ENCODE measurements at regions of chr9 and their contacts with region 1.

Region 1: DNA sequence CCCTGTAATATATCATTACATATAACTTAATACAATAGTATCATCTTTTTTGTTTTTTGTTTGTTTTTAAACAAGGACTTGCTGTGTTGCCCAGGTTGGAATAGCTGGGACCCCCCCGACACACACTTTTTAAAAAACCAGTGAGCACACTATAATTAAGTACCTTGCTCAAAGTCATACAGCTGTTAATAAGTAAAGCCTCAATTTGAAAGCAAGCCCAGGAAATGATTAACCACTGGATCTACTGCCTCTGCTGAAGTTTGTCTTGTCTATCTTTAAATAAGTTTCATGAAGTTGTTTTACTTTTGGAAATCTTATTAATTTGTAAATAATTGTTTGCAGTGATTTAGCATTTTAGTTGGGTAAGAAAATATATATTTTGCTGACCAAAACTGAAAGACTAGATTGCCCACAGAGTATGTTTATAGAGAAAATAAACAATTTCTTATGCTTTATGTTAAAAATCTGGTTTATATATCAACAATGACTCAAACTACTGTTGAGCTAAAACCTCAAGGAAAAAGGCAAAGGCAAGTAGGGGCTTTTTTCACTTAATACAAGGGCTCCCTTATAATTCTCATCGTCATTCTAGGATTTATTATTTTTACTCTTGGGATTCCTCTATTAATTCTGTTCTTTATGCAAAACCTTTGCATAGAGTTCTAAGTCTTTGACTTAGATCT is 5.8 kb upstream of the CARNMT1 start:
- DNase-seq: no peak
- ATAC-seq: no peak
- H3K4me3 ChIP-seq: no peak overlapping the region
- H3K4me3 Mint-ChIP-seq: no peak overlapping the region
- H3K27ac ChIP-seq: no peak overlapping the region
- H3K27ac Mint-ChIP-seq: no peak overlapping the region
- H3K4me1 ChIP-seq: peaks cover 2% of the 10 kb centered on the region
- H3K4me1 Mint-ChIP-seq: no peaks in the 10 kb centered on the region
- H3K27me3 ChIP-seq: no peaks in the 10 kb centered on the region
- H3K27me3 Mint-ChIP-seq: no peaks in the 10 kb centered on the region
- CTCF ChIP-seq: no peak

Region 2: DNA sequence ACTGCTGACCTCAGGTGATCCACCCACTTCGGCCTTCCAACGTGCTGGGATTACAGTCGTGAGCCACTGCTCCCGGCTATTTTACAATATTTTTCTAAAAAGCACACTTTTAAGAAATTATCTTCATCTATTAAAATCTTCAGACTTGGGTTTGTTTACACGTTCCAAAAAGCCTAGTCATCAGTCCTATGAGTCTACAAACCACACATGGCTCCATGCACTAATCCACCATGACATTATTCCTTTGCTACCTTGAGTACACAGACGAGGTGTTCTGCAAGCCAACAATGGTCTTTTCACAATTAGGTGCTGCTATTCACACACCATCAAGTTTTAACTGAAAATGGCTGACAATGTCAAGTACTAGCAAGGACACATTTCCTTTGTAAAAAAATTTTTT is 187.2 kb before region 1 on chr9:
- CTCF ChIA-PET with region 1: no interaction called
- POLR2A ChIA-PET with region 1: no interaction called
- intact Hi-C with region 1: no loop called
- DNase-seq: no peak
- ATAC-seq: no peak
- H3K4me3 ChIP-seq: no peak overlapping the region
- H3K4me3 Mint-ChIP-seq: no peak overlapping the region
- H3K27ac ChIP-seq: no peak overlapping the region
- H3K27ac Mint-ChIP-seq: no peak overlapping the region
- H3K4me1 ChIP-seq: no peaks in the 10 kb centered on the region
- H3K4me1 Mint-ChIP-seq: no peaks in the 10 kb centered on the region
- H3K27me3 ChIP-seq: no peaks in the 10 kb centered on the region
- H3K27me3 Mint-ChIP-seq: peaks cover 4% of the 10 kb centered on the region
- CTCF ChIP-seq: no peak

Region 3: GRCh38 chr9:75064307-75065025 is 30.5 kb after region 1 on chr9:
- CTCF ChIA-PET with region 1: no interaction called
- POLR2A ChIA-PET with region 1: interaction called, 4 read pairs
- intact Hi-C with region 1: loop called in 1 of 2 experiments (anchors 5 kb)
- DNase-seq: no peak
- ATAC-seq: no peak
- H3K4me3 ChIP-seq: no peak overlapping the region
- H3K4me3 Mint-ChIP-seq: no peak overlapping the region
- H3K27ac ChIP-seq: no peak overlapping the region
- H3K27ac Mint-ChIP-seq: peak overlapping the region; percentile 56
- H3K4me1 ChIP-seq: no peaks in the 10 kb centered on the region
- H3K4me1 Mint-ChIP-seq: peaks cover 8% of the 10 kb centered on the region
- H3K27me3 ChIP-seq: no peaks in the 10 kb centered on the region
- H3K27me3 Mint-ChIP-seq: no peaks in the 10 kb centered on the region
- CTCF ChIP-seq: no peak